ENCODE measurements at regions of chr1 and their contacts with region 1.

Region 1: DNA sequence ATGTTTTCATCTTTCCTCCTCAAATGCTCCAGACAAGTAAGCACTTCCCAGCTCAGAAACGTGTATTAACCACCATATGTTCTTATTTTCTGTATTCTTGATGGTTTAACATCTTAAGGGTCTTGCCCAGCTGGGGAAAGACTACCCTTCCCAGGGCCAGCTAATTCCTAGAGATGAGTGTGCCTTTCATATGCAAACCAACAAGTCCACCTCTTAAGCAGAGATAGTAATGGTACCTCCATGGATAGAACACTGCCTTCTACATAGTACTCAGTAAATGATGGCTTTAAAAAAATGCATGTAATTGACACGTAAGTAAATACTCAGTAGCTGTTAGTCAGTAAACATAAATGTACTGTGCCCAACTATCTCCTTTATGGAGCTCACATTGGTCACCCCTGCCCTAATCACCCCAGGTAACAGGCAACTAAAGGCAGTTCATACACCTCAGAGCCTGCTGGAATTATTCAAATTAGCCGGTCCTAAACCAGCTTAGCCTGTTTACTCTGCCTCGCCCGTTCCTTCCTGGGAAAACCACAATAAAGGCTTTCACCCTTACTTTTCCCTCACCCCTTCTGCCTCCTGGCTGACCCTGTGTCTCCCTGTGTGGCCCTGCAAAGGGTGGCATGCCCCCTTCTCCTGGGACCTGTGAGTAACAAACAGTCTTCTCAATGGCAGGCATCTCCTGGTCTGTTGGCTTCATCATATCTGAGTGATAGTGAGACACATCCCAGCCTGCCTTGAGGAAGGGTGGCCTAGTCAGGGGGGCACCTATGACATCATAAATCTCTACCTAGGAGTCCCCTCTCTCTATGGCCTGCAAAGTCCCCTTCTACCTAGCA is 40.1 kb upstream of the KLHDC7A start:
- DNase-seq: no peak
- H3K4me3 ChIP-seq: no peak overlapping the region
- H3K27ac ChIP-seq: no peak overlapping the region
- H3K4me1 ChIP-seq: no peaks in the 10 kb centered on the region
- H3K27me3 ChIP-seq: no peaks in the 10 kb centered on the region
- CTCF ChIP-seq: no peak

Region 2: DNA sequence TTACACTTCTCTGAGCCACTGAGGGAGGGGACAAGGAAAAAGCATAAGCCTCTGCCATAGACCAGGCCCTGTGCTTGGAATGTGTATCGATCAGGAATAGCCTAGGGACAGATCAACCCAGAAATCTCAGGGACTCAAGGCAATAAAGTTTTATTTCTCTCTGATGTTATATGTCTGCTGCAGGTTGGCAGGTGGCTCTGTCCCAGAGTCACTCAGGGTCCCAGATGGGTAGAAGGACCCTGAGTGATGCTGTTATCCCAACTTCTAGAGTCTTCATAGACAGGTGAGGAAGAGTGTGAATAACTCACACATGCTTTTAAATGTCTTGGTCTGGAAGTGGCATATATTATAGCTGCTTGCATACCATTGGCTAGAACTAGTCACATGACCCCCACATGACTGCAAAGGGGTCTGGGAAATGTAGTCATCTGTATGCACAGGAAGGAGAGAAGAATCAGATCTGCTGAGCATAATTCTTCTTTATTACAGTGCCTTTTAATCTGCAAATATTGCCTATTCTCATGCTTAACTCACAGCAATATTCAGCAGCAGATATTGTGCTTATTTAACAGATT is 11.9 kb after region 1 on chr1:
- CTCF ChIA-PET with region 1: no interaction called
- POLR2A ChIA-PET with region 1: interaction called, 13 read pairs
- intact Hi-C with region 1: no loop called
- DNase-seq: peak; percentile 50
- H3K4me3 ChIP-seq: no peak overlapping the region
- H3K27ac ChIP-seq: no peak overlapping the region
- H3K4me1 ChIP-seq: no peaks in the 10 kb centered on the region
- H3K27me3 ChIP-seq: no peaks in the 10 kb centered on the region
- CTCF ChIP-seq: no peak

Region 3: DNA sequence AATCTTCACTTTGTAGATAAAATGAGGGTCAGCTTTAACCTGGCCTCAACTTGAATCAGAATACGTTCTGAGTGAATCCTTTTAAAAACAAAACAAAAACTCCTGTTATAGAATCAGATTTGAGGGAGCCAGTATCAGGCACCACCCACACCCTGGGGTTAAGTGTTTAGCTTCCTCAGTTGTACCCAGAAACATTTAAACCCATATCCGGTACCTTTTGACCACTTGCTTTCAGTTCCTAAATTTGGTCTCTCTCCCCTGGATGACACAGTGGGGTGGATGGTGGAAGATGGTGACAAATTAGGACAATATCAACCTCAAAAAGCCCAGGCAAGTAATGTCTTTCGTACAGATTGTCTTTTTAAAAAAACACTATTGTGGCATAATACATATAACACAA is 50.6 kb after region 1 on chr1:
- CTCF ChIA-PET with region 1: no interaction called
- POLR2A ChIA-PET with region 1: no interaction called
- intact Hi-C with region 1: no loop called
- DNase-seq: no peak
- H3K4me3 ChIP-seq: no peak overlapping the region
- H3K27ac ChIP-seq: no peak overlapping the region
- H3K4me1 ChIP-seq: no peaks in the 10 kb centered on the region
- H3K27me3 ChIP-seq: peaks cover 4% of the 10 kb centered on the region
- CTCF ChIP-seq: no peak

Measured in A673 (cell line).